Heart left ventricle (tissue), 16 donors: ENCODE measurements at regions of chr14 and their contacts with region 1.

Region 1: GRCh38 chr14:81004575-81004974 is 49.2 kb downstream of the TSHR start:
- DNase-seq: no peak
- ATAC-seq: no peak
- H3K4me3 ChIP-seq: no peak overlapping the region
- H3K27ac ChIP-seq: no peak overlapping the region
- H3K4me1 ChIP-seq: peaks cover 0 to 11% (median 0%) of the 10 kb centered on the region in 12 donors
- H3K27me3 ChIP-seq: no peaks in the 10 kb centered on the region
- CTCF ChIP-seq: no peak
- POLR2A ChIP-seq: no peak

Region 2: GRCh38 chr14:80930836-80931389 is 73.7 kb before region 1 on chr14:
- intact Hi-C with region 1: no loop called
- DNase-seq: no peak
- ATAC-seq: no peak
- H3K4me3 ChIP-seq: no peak overlapping the region
- H3K27ac ChIP-seq: peak overlapping the region in 1 of 12 donors; percentile 61
- H3K4me1 ChIP-seq: peaks cover 0 to 13% (median 0%) of the 10 kb centered on the region in 12 donors
- H3K27me3 ChIP-seq: no peaks in the 10 kb centered on the region
- CTCF ChIP-seq: no peak
- POLR2A ChIP-seq: no peak

Region 3: GRCh38 chr14:80987235-80988032 is 17.1 kb before region 1 on chr14:
- intact Hi-C with region 1: no loop called
- DNase-seq: peak in 4 of 5 donors; percentile 43 to 52 (median 48)
- ATAC-seq: peak in 3 of 4 donors; percentile 61 to 80 (median 66)
- H3K4me3 ChIP-seq: no peak overlapping the region
- H3K27ac ChIP-seq: no peak overlapping the region
- H3K4me1 ChIP-seq: no peaks in the 10 kb centered on the region
- H3K27me3 ChIP-seq: peaks cover 0 to 30% (median 2%) of the 10 kb centered on the region in 9 donors
- CTCF ChIP-seq: peak; percentile 84 to 96 (median 92)
- POLR2A ChIP-seq: no peak

Region 4: DNA sequence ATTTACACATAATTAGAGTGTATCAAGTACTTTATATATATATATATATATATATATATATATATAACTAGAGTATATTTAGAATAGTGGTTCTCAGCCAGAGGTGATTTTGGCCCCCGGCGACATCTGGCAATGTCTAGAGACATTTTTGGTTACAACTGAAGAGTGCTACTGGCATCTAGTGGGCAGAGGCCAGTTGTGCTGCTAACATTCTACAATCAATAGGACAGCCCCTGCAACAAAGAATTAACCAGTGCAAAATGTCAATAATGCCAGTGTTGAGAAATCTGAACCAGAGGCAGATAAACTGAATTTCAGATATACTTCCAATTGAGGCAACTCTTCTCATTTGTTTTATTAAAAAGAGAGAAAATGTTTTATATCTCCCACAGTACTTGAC is 207.3 kb after region 1 on chr14:
- intact Hi-C with region 1: loop called in 4 of 10 experiments (anchors 5 kb)
- DNase-seq: peak in 3 of 5 donors; percentile 21 to 72 (median 50)
- ATAC-seq: peak in 3 of 4 donors; percentile 84 to 86 (median 85)
- H3K4me3 ChIP-seq: no peak overlapping the region
- H3K27ac ChIP-seq: no peak overlapping the region
- H3K4me1 ChIP-seq: peaks cover 0 to 33% (median 15%) of the 10 kb centered on the region in 12 donors
- H3K27me3 ChIP-seq: no peaks in the 10 kb centered on the region
- CTCF ChIP-seq: peak in 11 of 12 donors; percentile 29 to 58 (median 43)
- POLR2A ChIP-seq: no peak

Region 5: DNA sequence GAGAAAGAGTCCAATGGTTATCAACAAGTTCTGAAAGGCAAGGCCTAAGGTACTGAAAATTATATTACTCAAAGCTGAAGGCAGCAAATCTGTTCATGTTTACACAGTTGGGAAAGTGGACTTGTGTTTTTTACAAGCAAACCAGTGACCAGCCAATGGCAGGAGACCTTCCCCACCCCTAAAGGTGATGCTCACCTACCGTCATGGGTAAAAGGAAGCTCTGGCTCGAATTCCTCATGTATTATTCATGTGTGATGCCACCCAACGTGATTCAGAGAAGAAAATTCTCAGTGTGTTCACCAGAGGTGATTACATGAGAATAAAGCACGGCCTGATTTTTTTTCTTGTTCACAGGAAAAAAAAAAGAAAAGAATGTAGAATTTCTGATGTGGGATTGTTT is 1690.2 kb after region 1 on chr14:
- intact Hi-C with region 1: no loop called
- DNase-seq: no peak
- ATAC-seq: no peak
- H3K4me3 ChIP-seq: no peak overlapping the region
- H3K27ac ChIP-seq: no peak overlapping the region
- H3K4me1 ChIP-seq: no peaks in the 10 kb centered on the region
- H3K27me3 ChIP-seq: no peaks in the 10 kb centered on the region
- CTCF ChIP-seq: no peak
- POLR2A ChIP-seq: no peak